Cardiac septum (tissue), 1 donor: ENCODE measurements at regions of chr4 and their contacts with region 1.

Region 1: GRCh38 chr4:173522123-173522950 is 7.7 kb downstream of the HAND2 start:
- DNase-seq: peak; percentile 90

Region 2: DNA sequence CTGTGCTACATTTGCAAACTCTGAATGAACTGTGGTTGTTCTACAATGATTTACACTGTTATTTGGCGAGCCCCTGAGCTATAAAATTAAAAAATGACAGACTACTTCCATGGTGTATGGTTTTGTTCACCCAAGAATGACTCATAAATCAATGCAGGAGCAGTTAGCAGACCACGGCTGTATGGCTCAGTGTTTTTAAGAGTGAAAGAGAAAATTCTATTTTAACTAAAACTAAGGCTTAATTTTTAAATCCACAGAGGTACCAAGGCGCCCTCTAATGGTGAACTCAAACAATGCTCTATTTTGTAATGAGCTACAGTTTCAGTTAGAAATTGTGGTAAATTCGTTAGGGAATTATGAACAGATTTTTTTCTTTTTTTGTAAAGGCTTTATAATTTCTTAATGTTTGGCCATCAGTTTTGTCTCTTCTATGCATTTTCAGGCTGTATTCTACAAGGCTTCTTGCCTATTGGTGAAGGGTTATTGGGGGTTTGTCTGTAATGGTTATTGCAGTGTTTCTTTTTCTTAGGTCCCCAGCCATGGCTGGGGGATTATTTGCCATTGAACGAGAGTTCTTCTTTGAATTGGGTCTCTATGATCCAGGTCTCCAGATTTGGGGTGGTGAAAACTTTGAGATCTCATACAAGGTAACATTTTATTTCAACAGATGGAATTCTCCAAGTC is 220.7 kb before region 1 on chr4:
- intact Hi-C with region 1: no loop called
- DNase-seq: no peak

Region 3: DNA sequence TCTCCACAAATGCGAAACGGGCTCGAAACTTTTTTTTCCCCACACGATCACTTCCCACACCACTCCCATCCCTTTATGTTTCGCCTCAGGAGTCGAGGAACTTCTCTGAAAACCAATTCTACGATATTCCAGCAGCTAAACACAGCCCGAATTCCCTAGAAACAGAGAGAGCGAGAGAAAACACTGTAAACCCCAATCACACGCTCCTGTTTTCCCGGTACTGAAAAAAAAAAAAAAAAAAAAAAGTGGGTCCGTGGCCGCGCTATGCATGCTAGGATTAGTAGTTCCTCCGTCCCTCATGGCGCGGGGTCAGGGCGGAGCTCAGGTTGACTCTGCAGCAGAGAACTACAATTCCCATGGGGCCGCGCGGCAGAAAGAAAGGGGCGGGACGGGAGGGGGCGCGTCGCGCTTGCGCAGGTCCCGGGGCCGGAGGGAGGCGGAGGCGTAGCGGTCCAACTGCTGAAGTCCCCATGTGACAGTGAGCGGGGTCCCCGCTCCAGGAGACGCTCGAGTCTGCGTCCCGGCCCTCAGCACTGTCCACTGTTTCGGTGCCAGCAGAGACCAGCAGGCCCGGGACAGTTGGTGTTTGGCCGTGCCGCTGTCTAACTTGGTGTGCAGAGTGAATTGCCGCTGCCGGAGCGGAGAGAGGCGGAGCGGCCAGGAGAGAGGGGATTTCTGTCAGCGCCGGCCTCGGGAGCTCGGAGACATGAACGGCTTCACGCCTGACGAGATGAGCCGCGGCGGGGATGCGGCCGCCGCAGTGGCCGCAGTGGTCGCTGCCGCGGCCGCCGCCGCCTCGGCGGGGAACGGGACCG is 151.7 kb before region 1 on chr4 and contains the start of gene SAP30:
- intact Hi-C with region 1: no loop called
- DNase-seq: peak; percentile 99
- total RNA-seq, gene SAP30: 20.1 TPM

Region 4: GRCh38 chr4:173420324-173420752 is 102.0 kb before region 1 on chr4:
- intact Hi-C with region 1: no loop called
- DNase-seq: no peak

Region 5: GRCh38 chr4:174282836-174283506 is 760.6 kb after region 1 on chr4:
- intact Hi-C with region 1: loop called (anchors 10 kb)
- DNase-seq: peak; percentile 91